H1 (cell line): ENCODE measurements at regions of chr20 and their contacts with region 1.

Region 1: DNA sequence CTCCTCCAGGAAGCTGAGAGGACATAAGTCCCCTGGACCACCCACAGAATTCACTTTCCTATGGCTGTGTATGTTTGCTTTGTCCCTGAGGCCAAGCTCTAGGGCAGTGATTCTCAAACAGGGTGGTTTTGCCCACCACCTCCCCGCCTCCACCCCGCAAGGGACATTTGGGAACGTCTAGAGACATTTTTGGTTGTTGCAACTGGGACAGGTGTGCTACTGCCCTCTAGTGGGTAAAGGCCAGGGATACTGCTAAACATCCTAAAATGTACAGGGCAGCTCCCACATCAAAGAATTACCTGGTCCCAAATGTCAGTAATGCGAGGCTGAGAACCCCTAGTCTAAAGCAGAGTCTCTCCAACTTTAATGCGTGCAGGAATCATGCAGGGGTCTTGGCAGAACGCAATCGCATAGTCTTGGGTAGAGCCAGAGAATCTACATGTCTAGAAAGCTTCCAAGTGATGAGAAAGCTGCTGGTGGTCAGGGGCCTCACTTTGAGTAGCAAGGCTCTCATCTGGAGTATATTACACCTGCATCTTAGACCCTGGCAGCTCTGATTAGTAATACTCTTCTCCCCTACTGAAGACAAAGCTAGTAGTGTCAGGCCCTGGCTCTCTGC is 5.1 kb downstream of the KCNS1 start:
- DNase-seq: peak in 1 of 2 experiments; percentile 76
- H3K4me3 ChIP-seq: no peak overlapping the region
- H3K27ac ChIP-seq: no peak overlapping the region
- H3K4me1 ChIP-seq: peaks cover 0 to 7% (median 2%) of the 10 kb centered on the region in 4 experiments; a peak in 5 of 7 replicates
- H3K27me3 ChIP-seq: peaks cover 5 to 34% (median 28%) of the 10 kb centered on the region in 4 experiments
- CTCF ChIP-seq: peak; percentile 29 to 80 (median 79)
- EP300 ChIP-seq: no peak
- POLR2A ChIP-seq: no peak
- RAD21 ChIP-seq: peak; percentile 85 to 87

Region 2: DNA sequence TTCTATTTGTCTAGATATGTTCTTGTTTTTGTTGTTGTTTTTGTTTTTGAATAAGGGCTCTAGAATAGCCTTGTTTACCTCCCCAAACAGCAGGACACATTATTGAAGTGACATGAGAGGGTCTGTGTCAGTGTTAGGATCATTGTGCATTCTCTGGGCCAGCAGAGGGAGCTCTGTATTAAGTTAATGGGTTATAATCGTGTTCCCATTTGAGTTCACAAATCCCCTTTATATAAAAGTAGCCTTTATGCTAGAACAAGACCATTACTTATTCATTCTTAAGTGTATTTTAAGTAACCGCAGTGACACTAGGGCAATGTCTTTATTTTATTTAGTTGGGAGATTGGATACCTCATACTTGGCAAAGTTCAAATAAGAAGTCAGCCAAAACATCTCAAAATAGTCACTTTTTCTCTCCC is 84.7 kb before region 1 on chr20:
- CTCF ChIA-PET with region 1: interaction called, 40 read pairs
- POLR2A ChIA-PET with region 1: interaction called, 4 read pairs
- DNase-seq: peak in 1 of 2 experiments; percentile 55
- H3K4me3 ChIP-seq: no peak overlapping the region
- H3K27ac ChIP-seq: no peak overlapping the region
- H3K4me1 ChIP-seq: no peaks in the 10 kb centered on the region; a peak in 1 of 7 replicates
- H3K27me3 ChIP-seq: no peaks in the 10 kb centered on the region
- CTCF ChIP-seq: peak in 2 of 3 experiments; percentile 65 to 73; a peak in 3 of 4 replicates
- EP300 ChIP-seq: no peak
- POLR2A ChIP-seq: no peak
- RAD21 ChIP-seq: peak; percentile 85 to 86

Region 3: DNA sequence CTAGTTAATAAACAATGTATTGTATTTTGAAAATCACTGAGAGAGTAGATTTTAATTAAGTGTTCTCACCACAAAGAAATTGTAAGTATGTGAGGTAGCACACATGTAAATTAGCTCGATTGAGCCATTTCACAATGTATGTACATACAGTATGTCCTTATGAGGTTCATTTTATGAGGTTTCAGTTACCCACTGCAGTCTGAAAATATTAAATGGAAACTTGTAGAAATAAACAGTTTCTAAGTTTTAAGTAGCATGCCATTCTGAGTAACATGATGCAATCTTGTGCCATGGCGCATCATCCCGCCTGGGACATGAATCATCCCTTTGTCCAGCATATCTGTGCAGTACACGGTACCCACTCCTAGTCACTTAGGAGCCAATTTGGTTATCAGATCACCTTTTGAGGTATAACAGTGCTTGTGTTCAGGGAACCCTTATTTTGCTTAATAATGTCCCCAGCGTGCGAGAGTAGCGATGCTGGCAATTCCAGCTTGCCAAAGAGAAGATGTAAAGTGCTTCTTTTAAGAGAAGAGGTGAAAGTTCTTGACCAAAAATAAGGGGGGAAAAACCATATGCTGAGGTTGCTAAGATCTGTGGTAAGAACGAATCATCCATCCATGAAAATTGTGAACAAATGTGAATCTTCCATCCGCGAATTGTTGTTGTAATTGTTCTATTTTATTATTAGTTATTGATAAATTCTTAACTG is 59.7 kb before region 1 on chr20:
- CTCF ChIA-PET with region 1: interaction called, 233 read pairs
- POLR2A ChIA-PET with region 1: no interaction called
- DNase-seq: no peak
- H3K4me3 ChIP-seq: no peak overlapping the region
- H3K27ac ChIP-seq: 0 out of 2 replicates have a peak overlapping the region, but pooled peaks have one; percentile 57
- H3K4me1 ChIP-seq: peaks cover 0 to 4% (median 2%) of the 10 kb centered on the region in 4 experiments; a peak in 4 of 7 replicates
- H3K27me3 ChIP-seq: no peaks in the 10 kb centered on the region
- CTCF ChIP-seq: no peak
- EP300 ChIP-seq: no peak
- POLR2A ChIP-seq: no peak
- RAD21 ChIP-seq: no peak

Region 4: GRCh38 chr20:45044084-45044573 is 51.7 kb before region 1 on chr20:
- CTCF ChIA-PET with region 1: interaction called, 233 read pairs
- POLR2A ChIA-PET with region 1: interaction called, 3 read pairs
- DNase-seq: peak in 1 of 2 experiments; percentile 13
- H3K4me3 ChIP-seq: no peak overlapping the region
- H3K27ac ChIP-seq: no peak overlapping the region
- H3K4me1 ChIP-seq: peaks cover 0 to 14% (median 2%) of the 10 kb centered on the region in 4 experiments; a peak in 3 of 7 replicates
- H3K27me3 ChIP-seq: no peaks in the 10 kb centered on the region
- CTCF ChIP-seq: peak in 2 of 3 experiments; percentile 67 to 85; a peak in 2 of 4 replicates
- EP300 ChIP-seq: no peak
- POLR2A ChIP-seq: no peak
- RAD21 ChIP-seq: peak; percentile 84 to 86

Region 5: GRCh38 chr20:45070932-45071632 is 24.8 kb before region 1 on chr20:
- CTCF ChIA-PET with region 1: interaction called, 32 read pairs
- POLR2A ChIA-PET with region 1: interaction called, 3 read pairs
- DNase-seq: no peak
- H3K4me3 ChIP-seq: no peak overlapping the region
- H3K27ac ChIP-seq: no peak overlapping the region
- H3K4me1 ChIP-seq: peaks cover 0 to under 1% (median 0%) of the 10 kb centered on the region in 4 experiments; a peak in 1 of 7 replicates
- H3K27me3 ChIP-seq: no peaks in the 10 kb centered on the region
- CTCF ChIP-seq: no peak
- EP300 ChIP-seq: no peak
- POLR2A ChIP-seq: no peak
- RAD21 ChIP-seq: no peak

Region 6: DNA sequence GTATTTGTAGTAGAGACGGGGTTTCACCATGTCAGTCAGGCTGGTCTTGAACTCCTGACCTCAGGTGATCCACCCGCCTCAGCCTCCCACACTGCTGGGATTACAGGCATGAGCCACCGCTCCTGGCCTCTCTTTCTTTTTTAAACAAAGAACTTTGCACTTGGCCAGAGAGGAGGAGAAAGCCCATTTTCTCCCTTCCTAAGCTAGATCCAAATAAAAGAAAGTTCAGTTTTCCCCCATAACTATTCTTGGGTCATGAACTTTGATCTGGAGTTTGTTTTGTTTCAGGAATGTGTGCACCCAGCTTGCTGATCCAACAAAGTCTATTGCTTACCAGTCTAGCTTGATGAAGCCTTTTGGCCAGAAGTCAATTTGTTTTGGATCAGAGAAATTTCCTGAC is 18.3 kb before region 1 on chr20:
- CTCF ChIA-PET with region 1: interaction called, 32 read pairs
- POLR2A ChIA-PET with region 1: no interaction called
- DNase-seq: no peak
- H3K4me3 ChIP-seq: no peak overlapping the region
- H3K27ac ChIP-seq: no peak overlapping the region
- H3K4me1 ChIP-seq: peaks cover 0 to 8% (median 2%) of the 10 kb centered on the region in 4 experiments; a peak in 1 of 7 replicates
- H3K27me3 ChIP-seq: no peaks in the 10 kb centered on the region
- CTCF ChIP-seq: no peak
- EP300 ChIP-seq: no peak
- POLR2A ChIP-seq: no peak
- RAD21 ChIP-seq: no peak

Region 7: DNA sequence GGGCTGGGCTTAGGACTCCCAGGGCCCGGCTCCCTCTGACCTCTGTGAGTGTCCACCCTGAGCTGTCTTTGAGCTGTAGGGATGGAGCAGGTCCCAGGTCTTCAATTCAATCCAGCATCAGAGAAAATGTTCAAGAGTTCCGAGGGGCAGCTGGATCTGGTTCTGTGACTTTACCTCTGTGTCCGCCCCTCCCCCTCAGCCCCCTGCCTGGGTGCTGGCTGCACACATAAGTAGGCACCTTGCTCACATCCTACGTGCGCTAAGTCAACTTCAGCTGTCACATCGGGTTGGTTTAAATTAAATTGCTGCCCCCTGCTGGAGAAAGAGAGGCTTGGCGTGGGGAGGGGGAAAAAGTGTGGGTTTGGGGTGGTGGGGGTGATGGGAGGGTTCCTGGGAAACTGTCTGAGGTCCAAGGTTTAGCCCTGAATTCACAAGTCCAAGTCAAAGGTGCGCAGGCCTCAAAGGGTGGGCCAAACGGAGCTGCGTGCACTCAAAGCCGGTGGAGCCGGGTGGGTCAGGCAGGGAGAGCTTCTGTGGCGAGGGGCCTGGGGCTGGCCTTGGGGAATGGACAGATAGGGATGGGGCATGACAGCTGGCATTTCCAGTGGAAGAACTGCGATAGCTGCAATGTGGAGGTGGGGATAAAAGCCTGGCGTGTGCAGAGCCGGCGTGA is 16.1 kb after region 1 on chr20:
- CTCF ChIA-PET with region 1: interaction called, 210 read pairs
- POLR2A ChIA-PET with region 1: interaction called, 18 read pairs
- DNase-seq: peak in 1 of 2 experiments; percentile 75
- H3K4me3 ChIP-seq: no peak overlapping the region; a peak in 2 of 8 replicates
- H3K27ac ChIP-seq: no peak overlapping the region
- H3K4me1 ChIP-seq: peaks cover 0 to 7% (median 2%) of the 10 kb centered on the region in 4 experiments; a peak in 5 of 7 replicates
- H3K27me3 ChIP-seq: no peaks in the 10 kb centered on the region
- CTCF ChIP-seq: peak; percentile 63 to 69 (median 64)
- EP300 ChIP-seq: no peak
- POLR2A ChIP-seq: no peak
- RAD21 ChIP-seq: peak; percentile 50 to 61